PC-3 (cell line): ENCODE measurements at regions of chr15 and their contacts with region 1.

Region 1: DNA sequence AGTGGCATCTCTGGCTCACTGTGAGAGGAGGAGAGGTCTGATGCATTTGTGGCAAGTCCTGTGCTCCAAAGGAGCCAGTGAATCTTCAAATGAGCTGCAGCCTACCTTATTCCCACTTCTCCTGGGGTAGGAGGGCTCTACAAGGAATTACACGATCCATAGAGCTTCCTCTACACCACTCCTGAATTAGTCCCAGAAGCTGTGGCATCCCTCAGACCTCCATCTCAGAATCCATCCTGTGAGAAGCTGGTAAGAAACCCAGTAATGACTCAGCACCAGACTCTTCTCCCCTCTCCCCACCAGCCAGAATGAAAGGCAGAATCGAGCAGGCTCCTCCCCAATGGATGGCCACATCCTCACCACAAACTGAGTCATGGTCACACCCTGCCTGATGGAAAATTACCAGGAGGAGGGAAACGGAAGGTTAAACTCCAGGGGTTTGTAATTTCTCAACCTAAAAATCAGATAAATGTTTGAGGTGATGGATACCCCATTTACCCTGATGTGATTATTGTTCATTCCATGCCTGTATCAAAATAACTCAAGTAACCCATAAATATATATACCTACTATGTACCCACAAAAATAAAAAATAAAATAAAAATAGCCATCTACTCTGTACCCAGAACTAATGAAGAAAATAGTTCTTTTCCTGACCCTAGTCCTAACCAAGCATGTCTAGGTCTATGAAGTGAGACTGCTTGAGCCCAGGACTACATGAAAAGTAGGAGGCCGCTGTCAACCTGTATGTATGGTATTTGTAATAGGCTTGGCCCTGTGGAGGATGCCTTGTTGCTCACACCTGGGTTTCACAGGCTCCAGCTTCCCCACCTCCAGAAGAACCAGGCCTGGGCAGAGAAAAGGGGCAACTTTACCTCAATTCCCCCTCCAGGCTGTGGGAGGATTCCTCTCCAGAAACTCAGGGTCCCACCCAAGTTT is 6.6 kb upstream of the PKM start:
- DNase-seq: peak; percentile 94
- ATAC-seq: peak; percentile 91
- H3K4me3 ChIP-seq: peak overlapping the region; percentile 51
- H3K27ac ChIP-seq: peak overlapping the region; percentile 94
- H3K4me1 ChIP-seq: peaks cover 29% of the 10 kb centered on the region
- H3K27me3 ChIP-seq: no peaks in the 10 kb centered on the region
- CTCF ChIP-seq: no peak

Region 2: DNA sequence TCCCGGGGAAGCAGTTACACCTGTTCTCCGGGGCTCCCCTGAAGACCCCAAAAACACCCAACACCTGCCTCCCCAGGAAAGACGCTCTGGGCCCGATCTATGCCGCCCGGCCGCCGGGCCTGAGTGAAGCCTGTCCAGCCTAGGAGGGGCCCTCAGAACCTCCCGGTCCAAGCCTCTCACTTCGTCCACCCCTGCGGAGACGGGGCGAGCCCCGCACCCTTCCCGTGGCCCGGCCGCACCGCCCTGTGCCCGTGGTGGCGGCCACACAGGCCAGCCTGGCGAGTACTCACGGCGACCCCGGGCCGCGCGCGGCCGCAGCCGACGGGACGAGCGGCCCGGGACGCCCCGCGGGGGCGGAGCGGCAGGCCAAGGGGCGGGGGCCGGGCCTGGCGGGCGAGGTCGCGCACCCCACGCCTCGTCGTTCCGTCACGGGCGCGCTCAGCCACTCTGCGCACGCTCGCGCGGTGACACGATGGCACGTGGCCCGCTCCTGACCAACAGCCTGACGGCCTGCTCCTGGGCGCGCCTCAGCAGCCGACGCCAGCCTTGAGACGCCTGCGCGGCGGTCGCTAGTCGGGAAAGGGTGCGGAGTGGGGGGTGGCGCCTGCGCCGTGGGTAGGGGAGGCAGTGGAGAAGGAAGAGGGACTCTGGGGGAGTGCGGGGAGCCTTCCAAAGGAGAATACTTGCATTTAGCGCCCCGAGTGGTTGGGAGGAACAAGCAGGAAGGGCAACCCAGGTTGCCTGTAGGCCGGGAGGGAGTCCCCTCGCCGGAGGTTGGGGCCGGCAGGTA is 34.9 kb after region 1 on chr15 and contains the start of gene PARP6:
- CTCF ChIA-PET with region 1: no interaction called
- POLR2A ChIA-PET with region 1: interaction called, 35 read pairs
- intact Hi-C with region 1: no loop called
- DNase-seq: no peak
- ATAC-seq: no peak
- H3K4me3 ChIP-seq: no peak within 1 kb of the TSS
- H3K27ac ChIP-seq: no peak within 1 kb of the TSS
- H3K4me1 ChIP-seq: no peaks in the 10 kb centered on the region
- H3K27me3 ChIP-seq: no peaks in the 10 kb centered on the region
- CTCF ChIP-seq: no peak
- total RNA-seq, gene PARP6: not detected in 2 replicates

Region 3: DNA sequence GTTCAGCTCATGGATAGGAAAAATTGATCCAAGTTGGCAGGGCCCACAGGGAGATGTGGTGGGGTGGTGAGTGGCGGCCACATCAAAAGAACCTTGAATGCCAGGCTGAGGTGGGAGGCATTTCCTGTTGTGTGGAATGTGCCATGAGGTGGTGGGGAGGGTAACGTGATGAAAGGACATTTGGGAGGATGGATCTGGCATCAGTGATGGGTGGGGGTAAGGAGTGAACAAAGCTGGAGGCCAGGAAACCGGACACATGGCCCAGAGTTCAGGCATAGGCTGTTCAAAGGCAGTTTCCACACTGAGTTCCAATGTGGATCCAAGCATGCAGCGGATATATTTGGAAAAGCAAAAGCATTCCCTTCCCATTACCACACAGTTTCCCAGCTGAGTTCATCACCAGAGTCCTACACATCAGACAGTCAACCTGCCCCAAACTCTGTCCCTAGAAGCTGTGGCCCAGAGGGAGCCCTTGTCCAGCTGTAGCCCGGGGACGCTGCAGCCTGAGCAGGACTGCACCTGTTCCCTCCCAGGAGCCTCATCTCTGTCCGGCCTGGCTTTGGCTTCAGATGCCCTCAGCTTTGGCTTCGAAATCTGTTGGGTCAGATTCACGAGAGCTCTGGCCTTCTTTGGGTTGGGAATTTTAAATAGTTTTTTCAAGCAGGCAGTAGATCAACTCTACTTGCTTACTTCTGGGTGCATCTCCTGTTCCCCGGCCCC is 379.1 kb after region 1 on chr15:
- CTCF ChIA-PET with region 1: no interaction called
- POLR2A ChIA-PET with region 1: interaction called, 10 read pairs
- intact Hi-C with region 1: no loop called
- DNase-seq: no peak
- ATAC-seq: no peak
- H3K4me3 ChIP-seq: no peak overlapping the region
- H3K27ac ChIP-seq: no peak overlapping the region
- H3K4me1 ChIP-seq: no peaks in the 10 kb centered on the region
- H3K27me3 ChIP-seq: no peaks in the 10 kb centered on the region
- CTCF ChIP-seq: no peak